CD8-positive, alpha-beta memory T cell (primary cell): ENCODE measurements at regions of chr2 and their contacts with region 1.

Region 1: DNA sequence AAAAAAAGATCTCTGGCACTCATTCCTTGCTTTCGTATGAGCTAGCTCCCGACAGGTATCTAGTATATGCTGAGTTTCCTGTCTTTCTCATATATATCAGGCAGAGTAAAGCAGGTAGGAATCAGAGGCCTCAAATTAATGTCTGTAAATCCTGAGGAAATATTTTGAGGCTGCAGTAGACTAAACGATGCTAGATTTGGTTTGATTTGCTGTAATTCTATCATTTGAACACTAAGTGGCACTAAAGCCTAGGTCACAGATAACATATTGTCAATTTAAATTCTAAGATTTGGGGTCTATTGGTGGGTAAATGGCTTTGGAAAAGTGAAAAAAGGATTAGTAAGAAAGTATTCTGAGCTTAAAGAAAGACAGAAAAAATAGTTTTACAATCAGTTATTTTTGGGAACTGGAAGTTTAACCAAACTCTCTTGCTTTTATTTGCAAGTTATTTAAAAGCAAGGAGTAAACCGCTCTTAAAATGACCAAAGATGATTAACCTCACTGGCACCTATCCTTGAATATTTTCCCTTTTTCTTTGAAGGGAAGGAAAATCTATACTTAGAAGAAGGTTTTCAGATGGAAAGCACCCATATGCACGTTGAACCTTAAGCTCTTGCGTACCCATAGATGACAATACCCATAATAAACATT is 37.6 kb upstream of the SLC4A10 start:
- DNase-seq: peak in 2 of 5 donors; percentile 7 to 11
- H3K4me3 ChIP-seq: no peak overlapping the region
- H3K4me3 Mint-ChIP-seq: no peak overlapping the region
- H3K27ac ChIP-seq: no peak overlapping the region
- H3K27ac Mint-ChIP-seq: no peak overlapping the region
- H3K4me1 ChIP-seq: no peaks in the 10 kb centered on the region
- H3K4me1 Mint-ChIP-seq: no peaks in the 10 kb centered on the region
- H3K27me3 ChIP-seq: no peaks in the 10 kb centered on the region
- H3K27me3 Mint-ChIP-seq: no peaks in the 10 kb centered on the region

Region 2: DNA sequence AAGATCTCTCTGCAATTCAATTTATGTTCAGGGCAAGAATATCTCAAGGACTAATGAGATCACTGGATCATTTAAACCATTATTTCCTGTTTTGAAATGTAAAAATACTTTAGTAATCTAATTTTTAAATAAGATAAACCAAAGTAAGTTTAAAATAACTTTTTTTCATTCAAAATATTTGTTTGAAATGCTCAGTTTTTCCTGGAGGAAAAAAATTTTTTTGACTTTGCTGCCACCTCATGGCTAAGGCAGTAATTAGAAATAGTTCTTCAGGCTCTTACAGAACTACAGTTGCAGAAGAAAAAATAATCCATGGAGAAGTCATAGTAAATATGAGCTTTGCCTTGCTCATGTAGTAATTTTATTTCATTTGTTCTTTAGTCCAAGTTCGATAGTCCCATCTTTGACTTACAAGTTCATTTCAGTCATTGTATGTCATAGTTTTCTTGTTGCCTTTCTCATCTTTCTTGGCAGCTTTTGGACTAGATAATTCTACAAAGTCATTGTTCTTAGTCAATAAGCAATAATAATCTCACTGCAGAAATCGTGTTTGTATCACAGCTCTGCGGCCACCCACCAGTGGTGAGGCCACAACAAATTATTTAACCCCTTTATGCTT is 360.0 kb after region 1 on chr2:
- CTCF ChIA-PET with region 1: interaction called, 11 read pairs
- POLR2A ChIA-PET with region 1: no interaction called
- DNase-seq: no peak
- H3K4me3 ChIP-seq: no peak overlapping the region
- H3K4me3 Mint-ChIP-seq: peak overlapping the region in 2 of 7 donors; percentile 27 to 47
- H3K27ac ChIP-seq: no peak overlapping the region
- H3K27ac Mint-ChIP-seq: peak overlapping the region in 5 of 8 donors; percentile 24 to 88 (median 64)
- H3K4me1 ChIP-seq: peaks cover 7% of the 10 kb centered on the region
- H3K4me1 Mint-ChIP-seq: peaks cover 0 to 24% (median 24%) of the 10 kb centered on the region in 3 donors
- H3K27me3 ChIP-seq: no peaks in the 10 kb centered on the region
- H3K27me3 Mint-ChIP-seq: peaks cover 0 to 2% of the 10 kb centered on the region in 2 donors